ENCODE measurements at regions of chr14 and their contacts with region 1.

Region 1: DNA sequence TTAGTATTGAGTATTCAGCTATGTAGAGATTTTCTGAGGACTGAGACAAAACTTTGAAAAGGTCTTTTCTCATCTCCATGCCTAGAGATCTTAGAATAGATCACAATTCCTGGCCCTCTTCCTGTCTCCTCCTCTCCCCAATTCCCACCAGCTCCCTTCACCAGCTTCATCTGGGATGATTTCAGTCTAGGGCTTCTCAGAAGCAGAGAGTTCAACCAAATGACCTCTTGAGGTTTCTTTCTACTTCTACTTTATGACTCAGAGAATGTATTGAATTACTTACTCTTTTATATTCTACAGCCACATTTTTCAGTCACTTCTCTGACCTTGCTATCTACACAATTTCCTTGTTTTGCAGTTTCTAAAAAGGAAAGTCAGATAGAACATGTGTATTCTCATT is 19.4 kb upstream of the SNX6 start:
- DNase-seq: peak; percentile 21 to 67
- H3K4me3 ChIP-seq: no peak overlapping the region
- H3K27ac ChIP-seq: peak overlapping the region; percentile 93
- H3K4me1 ChIP-seq: peaks cover 21% of the 10 kb centered on the region
- H3K27me3 ChIP-seq: no peaks in the 10 kb centered on the region
- CTCF ChIP-seq: no peak

Region 2: DNA sequence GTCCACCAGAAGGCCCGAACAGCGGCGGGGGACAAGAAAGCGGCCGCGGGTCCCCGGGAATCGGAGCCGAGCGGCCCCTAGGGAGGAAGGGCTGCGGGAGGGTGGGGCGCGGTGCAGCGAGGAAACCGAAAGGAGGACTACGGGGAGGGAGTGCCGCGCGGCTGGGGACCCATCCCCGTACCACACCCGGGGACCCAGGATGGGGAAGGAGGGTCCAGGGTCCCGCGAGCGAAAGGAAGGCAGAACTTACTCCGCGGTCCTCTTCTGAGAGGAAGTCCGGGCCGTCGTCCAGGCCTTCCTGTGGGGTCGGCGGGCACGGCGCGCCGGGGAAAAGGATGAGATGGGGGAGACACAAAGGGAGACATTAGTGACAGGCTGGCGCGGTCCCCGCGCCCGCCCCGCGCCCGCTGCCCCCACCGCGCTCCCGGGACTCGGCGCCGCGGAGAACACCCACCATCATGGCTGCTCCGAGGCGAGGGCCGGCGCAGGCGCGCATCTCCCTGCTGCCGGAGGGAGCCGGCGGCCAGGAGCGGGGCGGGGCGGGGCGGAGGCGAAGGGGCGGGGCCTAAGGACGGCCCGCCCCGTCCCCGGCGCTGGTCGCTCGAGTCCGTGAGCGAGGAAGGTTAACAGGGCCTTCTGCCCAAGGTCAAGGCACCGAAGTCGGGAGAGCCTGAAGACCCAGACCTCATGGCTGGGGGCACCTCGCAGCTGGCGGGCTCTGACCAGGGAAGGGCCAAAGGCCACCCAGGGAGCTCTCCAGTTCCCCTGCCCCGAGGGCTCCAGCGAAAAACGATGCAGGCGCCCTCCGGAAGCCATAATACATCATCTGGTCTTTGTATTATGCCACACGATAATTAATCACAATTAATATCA is 19.5 kb before region 1 on chr14 and contains the start of gene SNX6:
- CTCF ChIA-PET with region 1: no interaction called
- POLR2A ChIA-PET with region 1: no interaction called
- intact Hi-C with region 1: loop called (anchors 1 kb)
- DNase-seq: peak; percentile 38 to 64
- H3K4me3 ChIP-seq: peak within 1 kb of the TSS; percentile 86
- H3K27ac ChIP-seq: peak within 1 kb of the TSS; percentile 34; the same call in 1 of the 2 replicates
- H3K4me1 ChIP-seq: peaks cover 4% of the 10 kb centered on the region
- H3K27me3 ChIP-seq: no peaks in the 10 kb centered on the region
- CTCF ChIP-seq: no peak
- total RNA-seq, gene SNX6: 43.0 and 51.8 TPM in 2 replicates

Region 3: GRCh38 chr14:36315159-36315853 is 1666.0 kb after region 1 on chr14:
- CTCF ChIA-PET with region 1: interaction called, 11 read pairs
- POLR2A ChIA-PET with region 1: no interaction called
- intact Hi-C with region 1: no loop called
- DNase-seq: no peak
- H3K4me3 ChIP-seq: no peak overlapping the region
- H3K27ac ChIP-seq: no peak overlapping the region
- H3K4me1 ChIP-seq: peaks cover 24% of the 10 kb centered on the region
- H3K27me3 ChIP-seq: no peaks in the 10 kb centered on the region
- CTCF ChIP-seq: no peak

Measured in PC-9 (cell line).